Naive thymus-derived CD8-positive, alpha-beta T cell (primary cell): ENCODE measurements at regions of chr22 and their contacts with region 1.

Region 1: DNA sequence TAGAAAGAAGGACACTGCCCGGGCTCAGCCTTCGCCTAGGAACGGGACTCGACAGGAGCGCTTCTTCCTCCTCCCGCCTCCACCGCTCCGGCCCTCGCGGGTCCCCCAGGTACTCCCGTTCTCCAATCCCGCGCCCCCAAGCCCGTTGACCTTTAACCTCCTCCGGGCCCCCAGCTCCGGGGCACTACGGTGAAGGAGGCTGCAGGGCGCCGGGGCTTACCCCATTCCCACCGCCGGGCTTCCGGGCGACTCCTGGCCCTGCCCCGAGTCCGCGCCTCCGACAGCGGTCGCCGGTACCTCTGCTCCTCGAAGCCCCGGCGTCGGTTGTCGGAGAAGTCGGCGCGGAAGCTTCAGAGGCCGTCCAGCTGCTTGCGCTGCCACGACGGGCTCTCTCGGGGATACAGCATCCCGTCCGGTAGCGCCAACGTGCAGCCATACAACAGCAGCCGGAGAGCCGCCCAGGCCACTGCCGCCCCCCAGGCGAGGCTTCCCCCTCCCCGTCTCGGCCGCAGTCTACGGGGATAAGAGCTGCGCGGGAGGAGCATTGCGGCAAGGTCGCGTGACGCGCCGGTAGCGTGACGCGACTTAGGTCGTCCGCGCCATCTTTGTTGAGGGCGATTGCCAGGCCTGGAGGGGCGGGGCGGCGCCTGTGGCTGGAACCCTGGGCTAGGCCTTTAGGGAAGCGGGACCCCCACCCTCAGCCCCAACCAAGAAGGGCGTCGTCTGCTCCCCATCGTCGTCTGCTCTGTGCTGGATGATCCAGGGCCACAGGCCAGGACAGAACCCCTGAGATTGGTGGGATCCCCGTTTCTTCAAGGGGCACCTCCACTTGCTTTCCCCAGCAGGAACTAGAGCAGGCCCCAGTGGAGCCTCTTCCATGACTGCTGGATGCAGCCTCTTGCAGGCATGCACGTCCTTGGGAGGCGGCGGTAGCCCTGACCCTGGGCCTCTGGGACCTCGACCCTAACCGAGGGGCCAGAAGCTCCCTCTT is 26.3 kb downstream of the RGL4 start:
- DNase-seq: peak; percentile 74 to 90 (median 81)
- ATAC-seq: peak; percentile 96
- H3K4me3 Mint-ChIP-seq: peak overlapping the region; percentile 75 to 91 (median 80)
- H3K27ac Mint-ChIP-seq: peak overlapping the region; percentile 71 to 94 (median 92)
- H3K4me1 Mint-ChIP-seq: peaks cover 12 to 32% (median 26%) of the 10 kb centered on the region in 4 donors
- H3K27me3 Mint-ChIP-seq: no peaks in the 10 kb centered on the region

Region 2: DNA sequence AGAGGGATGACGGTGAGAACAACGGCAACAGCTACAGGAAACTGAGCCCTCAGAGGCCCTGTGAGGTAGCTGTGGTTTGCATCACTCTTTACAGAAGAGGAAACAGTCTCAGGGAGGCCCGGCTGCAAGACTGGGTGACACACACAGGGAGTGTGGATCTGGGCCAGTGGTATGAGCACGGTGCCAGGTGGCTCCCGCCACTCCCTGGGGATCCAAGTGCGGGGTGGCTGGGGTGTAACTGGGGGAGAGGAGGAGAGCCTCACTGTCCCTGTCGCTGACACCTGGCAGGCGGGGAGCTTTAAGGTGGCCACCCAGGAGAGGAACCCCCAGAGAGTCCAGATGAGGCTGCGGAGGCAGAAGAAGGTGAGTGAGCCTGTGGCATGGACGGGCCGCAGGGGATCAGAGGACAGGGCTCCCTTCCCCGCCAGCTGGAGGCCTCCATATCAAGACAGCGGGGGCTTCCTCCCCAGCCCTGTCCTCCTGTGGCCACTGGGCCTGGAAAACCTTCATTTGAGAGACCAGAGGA is 20.7 kb before region 1 on chr22:
- POLR2A ChIA-PET with region 1: interaction called, 34 read pairs
- DNase-seq: peak; percentile 51 to 92 (median 82)
- ATAC-seq: peak; percentile 99
- H3K4me3 Mint-ChIP-seq: peak overlapping the region; percentile 92 to 100 (median 99)
- H3K27ac Mint-ChIP-seq: peak overlapping the region; percentile 100
- H3K4me1 Mint-ChIP-seq: peaks cover 26 to 74% (median 47%) of the 10 kb centered on the region in 4 donors
- H3K27me3 Mint-ChIP-seq: no peaks in the 10 kb centered on the region

Region 3: DNA sequence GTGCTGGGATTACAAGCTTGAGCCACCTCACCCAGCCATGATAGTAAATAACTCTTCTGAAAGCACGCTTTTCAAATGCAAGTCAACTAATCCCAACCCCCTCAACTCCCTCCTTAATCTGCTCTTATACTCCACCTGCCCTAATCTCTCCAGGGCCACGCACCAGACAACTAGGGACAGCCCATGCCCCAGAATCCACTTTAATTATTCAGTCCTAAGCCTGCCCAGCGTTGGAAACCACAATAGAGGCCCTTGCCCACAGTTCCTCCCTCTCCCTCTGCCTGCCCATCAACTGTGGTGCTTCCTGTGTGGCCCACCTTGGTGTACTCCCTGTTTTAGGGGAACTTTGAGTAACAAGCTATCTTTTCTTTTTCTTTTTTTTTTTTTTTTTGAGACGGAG is 39.8 kb after region 1 on chr22:
- POLR2A ChIA-PET with region 1: no interaction called
- DNase-seq: peak in 1 of 10 donors; percentile 34
- ATAC-seq: no peak
- H3K4me3 Mint-ChIP-seq: peak overlapping the region in 1 of 10 donors; percentile 4
- H3K27ac Mint-ChIP-seq: no peak overlapping the region
- H3K4me1 Mint-ChIP-seq: peaks cover 6 to 34% (median 9%) of the 10 kb centered on the region in 4 donors
- H3K27me3 Mint-ChIP-seq: no peaks in the 10 kb centered on the region

Region 4: GRCh38 chr22:23826465-23827199 is 109.5 kb after region 1 on chr22:
- POLR2A ChIA-PET with region 1: no interaction called
- DNase-seq: no peak
- ATAC-seq: no peak
- H3K4me3 Mint-ChIP-seq: no peak overlapping the region
- H3K27ac Mint-ChIP-seq: peak overlapping the region in 2 of 10 donors; percentile 39 to 43
- H3K4me1 Mint-ChIP-seq: peaks cover 4 to 16% (median 9%) of the 10 kb centered on the region in 4 donors
- H3K27me3 Mint-ChIP-seq: no peaks in the 10 kb centered on the region